H1 (cell line): ENCODE measurements at regions of chr3 and their contacts with region 1.

Region 1: GRCh38 chr3:111956995-111957734 is 21.7 kb upstream of the ABHD10 start:
- DNase-seq: peak in 1 of 2 experiments; percentile 10
- H3K4me3 ChIP-seq: peak overlapping the region in 1 of 4 experiments; percentile 33; a peak in 2 of 8 replicates
- H3K27ac ChIP-seq: no peak overlapping the region
- H3K4me1 ChIP-seq: peaks cover 0 to 15% (median 11%) of the 10 kb centered on the region in 4 experiments; a peak in 4 of 7 replicates
- H3K27me3 ChIP-seq: peaks cover 0 to 11% (median 10%) of the 10 kb centered on the region in 4 experiments; a peak in 5 of 7 replicates
- CTCF ChIP-seq: no peak
- EP300 ChIP-seq: no peak
- POLR2A ChIP-seq: no peak
- RAD21 ChIP-seq: no peak

Region 2: GRCh38 chr3:111744611-111745010 is 212.6 kb before region 1 on chr3:
- CTCF ChIA-PET with region 1: no interaction called
- POLR2A ChIA-PET with region 1: no interaction called
- DNase-seq: no peak
- H3K4me3 ChIP-seq: no peak overlapping the region
- H3K27ac ChIP-seq: no peak overlapping the region
- H3K4me1 ChIP-seq: peaks cover 0 to 5% (median 0%) of the 10 kb centered on the region in 4 experiments; a peak in 2 of 7 replicates
- H3K27me3 ChIP-seq: no peaks in the 10 kb centered on the region
- CTCF ChIP-seq: no peak
- EP300 ChIP-seq: no peak
- POLR2A ChIP-seq: no peak
- RAD21 ChIP-seq: no peak

Region 3: GRCh38 chr3:111895079-111895478 is 62.1 kb before region 1 on chr3:
- CTCF ChIA-PET with region 1: interaction called, 13 read pairs
- POLR2A ChIA-PET with region 1: no interaction called
- DNase-seq: no peak
- H3K4me3 ChIP-seq: no peak overlapping the region
- H3K27ac ChIP-seq: no peak overlapping the region
- H3K4me1 ChIP-seq: no peaks in the 10 kb centered on the region
- H3K27me3 ChIP-seq: no peaks in the 10 kb centered on the region
- CTCF ChIP-seq: peak in 2 of 3 experiments; percentile 55; a peak in 2 of 4 replicates
- EP300 ChIP-seq: no peak
- POLR2A ChIP-seq: no peak
- RAD21 ChIP-seq: peak; percentile 76 to 80

Region 4: GRCh38 chr3:111936191-111936841 is 20.8 kb before region 1 on chr3:
- CTCF ChIA-PET with region 1: no interaction called
- POLR2A ChIA-PET with region 1: no interaction called
- DNase-seq: no peak
- H3K4me3 ChIP-seq: no peak overlapping the region
- H3K27ac ChIP-seq: no peak overlapping the region
- H3K4me1 ChIP-seq: no peaks in the 10 kb centered on the region
- H3K27me3 ChIP-seq: no peaks in the 10 kb centered on the region
- CTCF ChIP-seq: no peak
- EP300 ChIP-seq: no peak
- POLR2A ChIP-seq: no peak
- RAD21 ChIP-seq: no peak